Ascending aorta (tissue), 2 donors: ENCODE measurements at regions of chr17 and their contacts with region 1.

Region 1: GRCh38 chr17:74457146-74457819 is 9.2 kb upstream of the CD300A start:
- DNase-seq: peak in 1 of 2 donors; percentile 90
- H3K4me3 ChIP-seq: no peak overlapping the region
- H3K27ac ChIP-seq: no peak overlapping the region
- H3K4me1 ChIP-seq: peaks cover 19 to 22% of the 10 kb centered on the region in 2 donors
- H3K27me3 ChIP-seq: no peaks in the 10 kb centered on the region
- CTCF ChIP-seq: peak; percentile 97 to 99 (median 99)

Region 2: GRCh38 chr17:74212913-74213791 is 244.1 kb before region 1 on chr17 and contains the start of gene TTYH2:
- intact Hi-C with region 1: loop called (anchors 2 kb)
- DNase-seq: peak; percentile 73 to 93
- H3K4me3 ChIP-seq: peak within 1 kb of the TSS; percentile 60 to 75
- H3K27ac ChIP-seq: peak within 1 kb of the TSS; percentile 68 to 81
- H3K4me1 ChIP-seq: peaks cover 23 to 34% of the 10 kb centered on the region in 2 donors
- H3K27me3 ChIP-seq: no peaks in the 10 kb centered on the region
- CTCF ChIP-seq: peak in 2 of 3 experiments; percentile 9 to 33
- total RNA-seq, gene TTYH2: 30.3 TPM

Region 3: GRCh38 chr17:74345433-74346241 is 111.6 kb before region 1 on chr17:
- intact Hi-C with region 1: no loop called
- DNase-seq: no peak
- H3K4me3 ChIP-seq: no peak overlapping the region
- H3K27ac ChIP-seq: no peak overlapping the region
- H3K4me1 ChIP-seq: no peaks in the 10 kb centered on the region
- H3K27me3 ChIP-seq: no peaks in the 10 kb centered on the region
- CTCF ChIP-seq: no peak

Region 4: GRCh38 chr17:74379495-74380085 is 77.7 kb before region 1 on chr17:
- intact Hi-C with region 1: loop called (anchors 1 kb)
- DNase-seq: peak; percentile 63 to 97
- H3K4me3 ChIP-seq: peak overlapping the region in 1 of 2 donors; percentile 57
- H3K27ac ChIP-seq: peak overlapping the region; percentile 28 to 76
- H3K4me1 ChIP-seq: peaks cover 12 to 15% of the 10 kb centered on the region in 2 donors
- H3K27me3 ChIP-seq: no peaks in the 10 kb centered on the region
- CTCF ChIP-seq: peak; percentile 86 to 99 (median 97)

Region 5: DNA sequence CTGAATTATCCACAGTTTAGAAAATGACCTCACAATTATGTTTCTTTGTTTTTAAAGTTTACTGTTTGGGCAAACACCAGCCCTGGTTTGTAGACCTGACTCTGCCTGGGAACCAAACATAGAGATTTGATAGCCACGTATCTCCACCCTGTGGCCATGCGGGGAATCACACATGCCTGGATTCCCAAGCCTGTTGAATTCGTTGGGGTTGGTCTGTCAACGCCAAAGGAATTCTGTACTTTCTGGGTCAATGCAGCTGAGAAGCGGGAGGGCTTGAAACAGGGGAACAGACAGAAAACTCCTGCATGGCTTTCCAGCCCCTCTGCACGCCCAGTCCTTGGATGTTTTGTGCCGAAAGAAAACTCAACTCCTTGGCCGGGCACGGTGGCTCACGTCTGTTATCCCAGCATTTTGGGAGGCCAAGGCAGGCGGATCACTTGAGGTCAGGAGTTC is 36.1 kb after region 1 on chr17:
- intact Hi-C with region 1: loop called (anchors 1 kb)
- DNase-seq: peak; percentile 21 to 81
- H3K4me3 ChIP-seq: no peak overlapping the region
- H3K27ac ChIP-seq: no peak overlapping the region
- H3K4me1 ChIP-seq: no peaks in the 10 kb centered on the region
- H3K27me3 ChIP-seq: no peaks in the 10 kb centered on the region
- CTCF ChIP-seq: peak; percentile 86 to 90 (median 89)